Activated T-helper 2 cell treated with anti-CD3 and anti-CD28 coated beads, Interferon-gamma antibody, Interleukin-2, Interleukin-4, amounts not matched to agents 10 μg/mL and 5 μg/mL and 100 μg/mL, durations not matched to agents 14 hours and 24 hours and 36 hours (primary cell): ENCODE measurements at regions of chr5 and their contacts with region 1.

Region 1: GRCh38 chr5:55102348-55102747 is at the start of gene GZMA:
- DNase-seq: peak; percentile 31
- H3K4me3 Mint-ChIP-seq: peak within 1 kb of the TSS; percentile 79
- H3K27ac Mint-ChIP-seq: peak within 1 kb of the TSS; percentile 88
- H3K4me1 Mint-ChIP-seq: peaks cover 72% of the 10 kb centered on the region
- H3K27me3 Mint-ChIP-seq: no peaks in the 10 kb centered on the region
- total RNA-seq, gene GZMA: 95.1 and 96.9 TPM in 2 replicates

Region 2: DNA sequence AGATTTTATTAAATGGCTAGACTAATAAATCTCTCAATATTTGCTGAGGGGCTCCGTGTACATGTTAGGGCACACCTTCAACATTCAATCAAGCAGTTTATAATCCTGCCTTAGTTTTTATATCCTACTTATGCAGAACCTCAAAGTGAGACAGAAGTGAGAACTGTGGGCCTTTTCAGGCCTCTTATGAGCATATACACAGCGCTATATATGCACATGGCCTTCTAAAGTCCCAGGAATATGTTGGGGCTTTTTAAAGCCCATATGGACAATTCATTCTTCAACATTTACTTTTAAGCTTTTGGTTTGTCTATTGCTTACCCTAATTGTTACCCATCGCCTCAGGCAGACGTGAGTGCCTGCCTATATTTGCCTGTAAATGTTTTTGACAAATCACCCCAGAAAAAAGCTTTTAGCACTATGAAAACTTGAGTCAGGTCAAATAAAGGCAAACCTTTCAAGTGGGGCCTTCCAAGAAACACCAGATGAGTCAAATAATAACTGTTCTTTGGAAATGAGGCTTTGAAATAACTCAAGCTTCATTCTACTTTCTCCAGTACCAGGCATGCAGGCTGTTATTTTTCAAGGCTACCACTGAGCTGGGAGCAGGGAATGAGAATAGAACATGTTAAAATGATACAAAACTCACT is 175.1 kb before region 1 on chr5:
- intact Hi-C with region 1: loop called (anchors 1 kb)
- DNase-seq: no peak
- H3K4me3 Mint-ChIP-seq: no peak overlapping the region
- H3K27ac Mint-ChIP-seq: peak overlapping the region; percentile 56
- H3K4me1 Mint-ChIP-seq: peaks cover 21% of the 10 kb centered on the region
- H3K27me3 Mint-ChIP-seq: no peaks in the 10 kb centered on the region

Region 3: GRCh38 chr5:55027595-55027994 is 74.8 kb before region 1 on chr5:
- intact Hi-C with region 1: loop called (anchors 2 kb)
- DNase-seq: peak; percentile 53
- H3K4me3 Mint-ChIP-seq: peak overlapping the region; percentile 38
- H3K27ac Mint-ChIP-seq: peak overlapping the region; percentile 69
- H3K4me1 Mint-ChIP-seq: peaks cover 76% of the 10 kb centered on the region
- H3K27me3 Mint-ChIP-seq: no peaks in the 10 kb centered on the region

Region 4: GRCh38 chr5:55062039-55062779 is 40.1 kb before region 1 on chr5:
- intact Hi-C with region 1: loop called (anchors 1 kb)
- DNase-seq: peak; percentile 78
- H3K4me3 Mint-ChIP-seq: peak overlapping the region; percentile 64
- H3K27ac Mint-ChIP-seq: peak overlapping the region; percentile 94
- H3K4me1 Mint-ChIP-seq: peaks cover 70% of the 10 kb centered on the region
- H3K27me3 Mint-ChIP-seq: no peaks in the 10 kb centered on the region

Region 5: DNA sequence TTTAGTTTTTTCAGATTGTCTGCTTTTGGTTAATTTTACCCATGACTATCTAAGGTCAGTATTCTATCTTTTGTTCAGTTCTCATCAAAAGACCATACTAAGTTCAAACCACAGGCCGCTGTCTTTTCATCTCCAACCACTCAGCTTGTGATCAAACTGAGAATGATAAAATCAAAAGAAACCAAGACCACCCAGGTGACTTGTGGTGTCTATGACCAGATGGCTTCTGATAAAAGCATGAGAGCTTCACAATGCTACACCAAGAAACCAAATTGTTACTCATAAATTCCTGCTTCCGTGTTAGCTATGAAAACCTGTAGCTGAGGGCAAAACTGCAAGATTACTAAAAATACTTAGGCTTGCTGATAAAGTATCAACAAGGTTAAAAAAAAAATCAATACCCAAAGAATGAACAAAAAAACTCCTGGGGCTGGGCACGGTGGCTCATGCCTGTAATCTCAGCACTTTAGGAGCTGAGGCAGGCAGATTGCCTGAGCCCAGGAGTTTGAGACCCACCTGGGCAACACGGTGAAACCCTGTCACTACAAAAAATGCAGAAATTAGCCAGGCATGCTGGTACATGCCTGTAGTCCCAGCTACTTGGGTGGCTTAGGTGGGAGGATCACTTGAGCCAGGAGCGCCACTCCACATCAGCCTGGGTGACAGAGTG is 31.8 kb after region 1 on chr5:
- intact Hi-C with region 1: loop called (anchors 1 kb)
- DNase-seq: peak; percentile 44
- H3K4me3 Mint-ChIP-seq: no peak overlapping the region
- H3K27ac Mint-ChIP-seq: peak overlapping the region; percentile 39
- H3K4me1 Mint-ChIP-seq: peaks cover 41% of the 10 kb centered on the region
- H3K27me3 Mint-ChIP-seq: peaks cover 2% of the 10 kb centered on the region